Activated naive CD4-positive, alpha-beta T cell treated with anti-CD3 and anti-CD28 coated beads for 36 hours (primary cell): ENCODE measurements at regions of chr2 and their contacts with region 1.

Region 1: DNA sequence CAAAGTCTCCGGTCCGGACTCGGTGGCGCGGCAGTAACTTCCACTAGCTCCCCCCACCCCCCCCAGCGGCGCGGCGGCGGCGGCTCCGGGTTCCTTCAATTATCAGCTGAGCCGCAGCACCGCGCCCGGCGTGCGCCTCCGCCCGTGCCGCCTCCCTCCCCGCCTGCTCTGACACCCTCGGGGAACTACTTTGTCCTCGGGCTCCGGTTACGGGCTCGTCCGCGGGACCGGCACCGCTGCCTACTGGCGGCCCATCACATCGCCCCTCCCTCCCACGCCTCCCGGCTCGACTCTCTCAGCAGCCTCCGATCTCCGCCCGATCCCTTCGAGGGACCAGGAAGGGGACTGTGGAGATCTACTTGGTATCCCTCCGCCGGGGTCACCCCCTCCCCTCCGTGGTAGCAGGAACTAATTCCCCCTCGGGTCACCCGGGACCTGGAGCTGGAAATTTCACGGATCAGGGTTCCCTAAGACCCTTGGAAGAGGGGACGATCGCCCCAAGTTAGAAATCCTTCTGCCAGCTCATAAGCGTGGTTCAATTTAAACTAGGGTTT is at the start of gene TRIP12:
- DNase-seq: peak; percentile 91
- H3K4me3 Mint-ChIP-seq: peak within 1 kb of the TSS; percentile 90
- H3K27ac Mint-ChIP-seq: peak within 1 kb of the TSS; percentile 99
- H3K4me1 Mint-ChIP-seq: peaks cover 34% of the 10 kb centered on the region
- H3K27me3 Mint-ChIP-seq: no peaks in the 10 kb centered on the region
- total RNA-seq, gene TRIP12: 188 to 190 TPM

Region 2: GRCh38 chr2:229852565-229852964 is 69.4 kb before region 1 on chr2:
- CTCF ChIA-PET with region 1: no interaction called
- intact Hi-C with region 1: loop called (anchors 1 kb)
- DNase-seq: peak; percentile 66
- H3K4me3 Mint-ChIP-seq: no peak overlapping the region
- H3K27ac Mint-ChIP-seq: peak overlapping the region; percentile 0
- H3K4me1 Mint-ChIP-seq: peaks cover 60% of the 10 kb centered on the region
- H3K27me3 Mint-ChIP-seq: no peaks in the 10 kb centered on the region

Region 3: DNA sequence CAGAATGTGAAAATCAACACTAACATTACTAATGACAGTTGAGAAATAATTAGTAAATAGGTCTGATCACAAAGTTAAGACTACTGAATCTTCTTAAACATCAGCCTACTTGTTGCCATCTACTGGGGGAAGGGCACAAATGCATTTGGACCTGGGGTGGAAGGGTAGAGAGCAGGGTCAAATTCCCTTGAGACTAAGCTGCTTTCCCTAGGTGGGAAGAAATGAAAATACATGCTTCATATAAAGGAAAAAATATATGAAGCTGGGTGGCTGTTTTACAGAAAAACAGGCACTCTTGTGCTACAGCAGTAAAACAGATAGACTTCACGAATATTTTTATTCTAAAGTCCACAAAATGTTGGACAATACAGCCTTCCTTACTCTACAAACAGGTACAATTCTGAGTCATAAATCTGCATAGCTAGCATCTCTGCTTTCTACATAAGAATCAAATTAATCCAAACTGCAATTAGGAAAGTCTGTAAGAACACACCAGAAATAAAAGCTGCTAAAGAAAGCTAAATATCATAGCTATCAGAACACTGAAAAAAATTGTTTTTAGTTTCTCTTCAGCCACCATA is 11.0 kb before region 1 on chr2:
- CTCF ChIA-PET with region 1: interaction called, 9 read pairs
- intact Hi-C with region 1: loop called (anchors 1 kb)
- DNase-seq: peak; percentile 36
- H3K4me3 Mint-ChIP-seq: no peak overlapping the region
- H3K27ac Mint-ChIP-seq: peak overlapping the region; percentile 7
- H3K4me1 Mint-ChIP-seq: peaks cover 53% of the 10 kb centered on the region
- H3K27me3 Mint-ChIP-seq: no peaks in the 10 kb centered on the region

Region 4: GRCh38 chr2:230326453-230327417 is 404.8 kb after region 1 on chr2 and contains the start of gene SP140L:
- CTCF ChIA-PET with region 1: no interaction called
- intact Hi-C with region 1: loop called (anchors 5 kb)
- DNase-seq: peak; percentile 88
- H3K4me3 Mint-ChIP-seq: peak within 1 kb of the TSS; percentile 96
- H3K27ac Mint-ChIP-seq: peak within 1 kb of the TSS; percentile 99
- H3K4me1 Mint-ChIP-seq: peaks cover 60% of the 10 kb centered on the region
- H3K27me3 Mint-ChIP-seq: no peaks in the 10 kb centered on the region
- total RNA-seq, gene SP140L: 41.8 to 44.7 TPM